ENCODE measurements at regions of chr4 and their contacts with region 1.

Region 1: DNA sequence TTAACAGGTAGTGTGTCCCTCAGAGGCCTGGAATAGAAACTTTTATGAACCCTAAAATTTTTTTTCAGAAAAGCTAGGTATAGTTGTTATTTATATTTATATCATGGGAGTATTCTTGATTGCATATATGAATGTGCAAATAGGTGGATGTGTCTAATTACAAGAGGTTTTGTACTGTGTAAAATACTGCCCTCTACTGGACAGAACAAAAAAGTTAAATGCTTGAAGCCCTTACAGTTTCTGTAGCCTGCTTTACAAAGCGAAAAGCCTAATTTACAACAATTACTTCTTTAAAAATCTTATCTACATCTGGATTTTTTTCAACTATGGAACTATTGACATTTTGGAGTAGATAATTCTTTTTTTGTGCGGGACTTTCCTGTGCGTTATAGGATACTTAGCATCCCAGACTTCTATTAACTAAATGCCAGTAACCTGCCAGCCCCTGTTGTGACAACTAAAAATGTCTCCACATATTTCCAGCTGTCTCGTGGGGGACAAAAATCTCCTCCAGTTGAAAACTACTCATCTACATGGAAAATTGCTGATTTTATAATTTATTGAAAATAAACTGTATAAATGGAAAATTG is 35.1 kb downstream of the ENPEP start:
- DNase-seq: peak in 3 of 14 experiments; percentile 64 to 69 (median 69)
- ATAC-seq: peak; percentile 56
- H3K4me3 ChIP-seq: no peak overlapping the region
- H3K4me3 Mint-ChIP-seq: no peak overlapping the region
- H3K27ac ChIP-seq: no peak overlapping the region
- H3K27ac Mint-ChIP-seq: no peak overlapping the region
- H3K4me1 ChIP-seq: peaks cover 3% of the 10 kb centered on the region
- H3K4me1 Mint-ChIP-seq: peaks cover 10% of the 10 kb centered on the region
- H3K27me3 ChIP-seq: no peaks in the 10 kb centered on the region
- H3K27me3 Mint-ChIP-seq: no peaks in the 10 kb centered on the region
- CTCF ChIP-seq: peak; percentile 80

Region 2: DNA sequence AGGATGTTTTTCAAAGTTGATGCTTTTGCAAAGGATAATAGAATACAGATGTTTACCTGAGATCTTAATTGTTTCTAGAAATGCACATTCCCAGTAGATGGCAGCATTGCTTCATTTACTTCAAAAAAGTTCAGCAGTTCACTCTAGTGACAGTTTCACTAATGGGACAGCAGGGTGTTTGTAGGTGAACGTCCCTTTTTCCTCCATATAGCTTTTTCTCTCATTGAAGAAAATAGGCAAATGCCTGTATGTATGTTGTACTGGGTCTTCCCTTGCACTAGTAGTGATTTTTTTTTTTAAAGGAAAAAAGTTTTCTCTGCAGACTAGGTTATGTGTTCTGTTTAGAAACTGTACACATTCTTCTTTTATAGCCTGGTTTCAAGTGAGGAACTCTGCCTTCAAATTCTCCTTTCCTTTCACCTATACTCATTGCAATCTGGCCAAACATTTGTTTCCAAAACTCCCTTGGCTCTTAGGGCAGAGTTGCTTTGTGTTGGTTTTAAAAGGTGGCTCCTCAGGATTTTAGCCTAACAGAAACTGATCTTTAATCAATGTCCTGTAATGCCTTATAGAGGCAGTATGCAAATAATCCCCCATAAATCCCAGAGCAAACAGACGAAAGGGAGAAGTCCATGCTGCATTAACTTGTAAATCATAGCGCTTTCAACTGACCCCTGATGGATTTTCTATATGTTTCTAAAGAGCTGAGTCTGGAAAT is 512.0 kb before region 1 on chr4:
- CTCF ChIA-PET with region 1: interaction called, 13 read pairs
- POLR2A ChIA-PET with region 1: interaction called, 6 read pairs
- intact Hi-C with region 1: loop called (anchors 1 kb)
- DNase-seq: peak in 6 of 14 experiments; percentile 1 to 84 (median 56)
- ATAC-seq: peak; percentile 67
- H3K4me3 ChIP-seq: no peak overlapping the region
- H3K4me3 Mint-ChIP-seq: no peak overlapping the region
- H3K27ac ChIP-seq: no peak overlapping the region
- H3K27ac Mint-ChIP-seq: no peak overlapping the region
- H3K4me1 ChIP-seq: no peaks in the 10 kb centered on the region
- H3K4me1 Mint-ChIP-seq: no peaks in the 10 kb centered on the region
- H3K27me3 ChIP-seq: peaks cover 0 to 6% of the 10 kb centered on the region in 2 experiments
- H3K27me3 Mint-ChIP-seq: peaks cover 21% of the 10 kb centered on the region
- CTCF ChIP-seq: peak; percentile 92

Region 3: GRCh38 chr4:110049951-110050925 is 460.8 kb before region 1 on chr4:
- CTCF ChIA-PET with region 1: interaction called, 3 read pairs
- POLR2A ChIA-PET with region 1: no interaction called
- intact Hi-C with region 1: loop called (anchors 1 to 2 kb)
- DNase-seq: peak; percentile 18 to 72 (median 44)
- ATAC-seq: peak; percentile 71
- H3K4me3 ChIP-seq: no peak overlapping the region
- H3K4me3 Mint-ChIP-seq: no peak overlapping the region
- H3K27ac ChIP-seq: no peak overlapping the region
- H3K27ac Mint-ChIP-seq: no peak overlapping the region
- H3K4me1 ChIP-seq: no peaks in the 10 kb centered on the region
- H3K4me1 Mint-ChIP-seq: no peaks in the 10 kb centered on the region
- H3K27me3 ChIP-seq: no peaks in the 10 kb centered on the region
- H3K27me3 Mint-ChIP-seq: no peaks in the 10 kb centered on the region
- CTCF ChIP-seq: peak; percentile 85

Region 4: DNA sequence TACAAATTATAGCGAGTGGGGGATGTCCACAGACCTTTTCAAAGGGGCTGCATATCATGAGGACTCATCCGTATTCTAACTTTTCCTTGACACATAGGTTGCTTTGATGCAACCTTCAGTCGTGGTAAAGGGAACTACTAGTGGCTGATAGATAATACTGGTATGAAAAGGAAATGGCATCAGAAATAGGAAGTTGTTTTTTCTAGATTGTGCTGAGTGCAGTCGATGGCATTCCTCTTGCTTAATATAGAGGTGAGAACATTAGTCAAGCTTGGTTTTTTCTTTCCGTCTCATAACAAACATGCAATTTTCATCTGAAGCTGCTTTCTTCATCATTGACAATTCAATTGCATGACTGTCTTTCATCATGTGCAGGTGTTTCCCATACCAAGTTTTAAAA is 18.5 kb before region 1 on chr4:
- CTCF ChIA-PET with region 1: no interaction called
- POLR2A ChIA-PET with region 1: no interaction called
- intact Hi-C with region 1: no loop called
- DNase-seq: peak in 3 of 14 experiments; percentile 13 to 42 (median 15)
- ATAC-seq: no peak
- H3K4me3 ChIP-seq: no peak overlapping the region
- H3K4me3 Mint-ChIP-seq: no peak overlapping the region
- H3K27ac ChIP-seq: no peak overlapping the region
- H3K27ac Mint-ChIP-seq: no peak overlapping the region
- H3K4me1 ChIP-seq: no peaks in the 10 kb centered on the region
- H3K4me1 Mint-ChIP-seq: no peaks in the 10 kb centered on the region
- H3K27me3 ChIP-seq: peaks cover 0 to 3% of the 10 kb centered on the region in 2 experiments
- H3K27me3 Mint-ChIP-seq: peaks cover 34% of the 10 kb centered on the region
- CTCF ChIP-seq: no peak